B cell (primary cell): ENCODE measurements at regions of chr1 and their contacts with region 1.

Region 1: DNA sequence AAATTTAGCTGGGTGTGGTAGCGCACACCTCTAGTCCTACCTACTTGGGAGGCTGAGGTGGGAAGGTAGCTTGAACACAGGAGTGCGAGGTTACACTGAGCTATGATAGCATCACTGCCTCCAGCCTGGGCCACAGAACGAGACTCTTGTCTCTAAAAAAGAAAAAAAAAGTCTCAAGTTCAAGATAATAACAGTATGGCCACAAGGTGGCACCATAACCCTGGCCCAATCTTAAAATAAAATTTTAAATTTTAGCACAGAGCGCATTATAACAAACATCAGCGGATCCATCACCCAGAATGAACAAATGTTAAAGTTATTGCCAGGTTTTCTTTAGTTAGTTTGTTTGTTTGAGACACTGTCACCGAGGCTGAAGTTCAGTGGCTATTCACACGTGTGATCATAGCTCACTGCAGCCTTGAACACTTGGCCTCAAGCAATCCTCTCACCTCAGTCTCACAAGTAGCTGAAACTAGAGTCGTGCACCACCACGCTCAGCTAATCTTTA is 2.9 kb upstream of the HTR6 start:
- DNase-seq: peak; percentile 64
- ATAC-seq: peak; percentile 20
- H3K4me3 ChIP-seq: no peak overlapping the region
- H3K4me3 Mint-ChIP-seq: no peak overlapping the region
- H3K27ac ChIP-seq: no peak overlapping the region
- H3K27ac Mint-ChIP-seq: no peak overlapping the region
- H3K4me1 ChIP-seq: peaks cover 22 to 23% of the 10 kb centered on the region in 2 donors
- H3K4me1 Mint-ChIP-seq: peaks cover 17% of the 10 kb centered on the region
- H3K27me3 ChIP-seq: peaks cover 0 to 28% (median 7%) of the 10 kb centered on the region in 4 experiments
- H3K27me3 Mint-ChIP-seq: peaks cover 42% of the 10 kb centered on the region
- CTCF ChIP-seq: peak; percentile 79

Region 2: GRCh38 chr1:19651141-19651737 is 10.5 kb before region 1 on chr1:
- CTCF ChIA-PET with region 1: interaction called, 20 read pairs
- POLR2A ChIA-PET with region 1: no interaction called
- intact Hi-C with region 1: no loop called
- DNase-seq: peak; percentile 57
- ATAC-seq: peak; percentile 48
- H3K4me3 ChIP-seq: no peak overlapping the region
- H3K4me3 Mint-ChIP-seq: no peak overlapping the region
- H3K27ac ChIP-seq: no peak overlapping the region
- H3K27ac Mint-ChIP-seq: no peak overlapping the region
- H3K4me1 ChIP-seq: peaks cover 0 to 6% of the 10 kb centered on the region in 2 donors
- H3K4me1 Mint-ChIP-seq: peaks cover 2% of the 10 kb centered on the region
- H3K27me3 ChIP-seq: peaks cover 0 to 16% (median 1%) of the 10 kb centered on the region in 4 experiments
- H3K27me3 Mint-ChIP-seq: peaks cover 28% of the 10 kb centered on the region
- CTCF ChIP-seq: peak; percentile 54

Region 3: DNA sequence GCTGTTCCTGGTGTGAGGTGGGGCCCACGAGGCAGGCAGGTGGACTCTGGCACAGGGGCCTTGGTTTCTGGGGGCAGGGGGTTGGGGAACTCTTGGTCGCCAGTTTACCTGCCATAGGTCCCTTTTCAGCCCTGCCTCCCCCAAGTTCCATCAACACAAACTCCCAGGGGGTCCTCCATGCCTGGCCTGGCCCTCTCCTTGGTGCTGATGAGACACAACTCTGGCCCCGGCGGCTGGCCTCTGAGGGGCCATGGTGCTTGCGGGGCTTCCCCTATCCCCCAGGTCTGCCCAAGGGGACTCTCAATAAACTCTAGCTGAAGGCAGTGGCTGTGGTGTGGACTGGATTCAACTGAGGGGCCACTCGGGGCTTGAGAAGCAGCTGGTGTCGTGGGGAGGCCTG is 18.9 kb after region 1 on chr1:
- CTCF ChIA-PET with region 1: interaction called, 12 read pairs
- POLR2A ChIA-PET with region 1: no interaction called
- intact Hi-C with region 1: no loop called
- DNase-seq: no peak
- ATAC-seq: no peak
- H3K4me3 ChIP-seq: no peak overlapping the region
- H3K4me3 Mint-ChIP-seq: no peak overlapping the region
- H3K27ac ChIP-seq: no peak overlapping the region
- H3K27ac Mint-ChIP-seq: no peak overlapping the region
- H3K4me1 ChIP-seq: no peaks in the 10 kb centered on the region
- H3K4me1 Mint-ChIP-seq: no peaks in the 10 kb centered on the region
- H3K27me3 ChIP-seq: peaks cover 0 to 4% (median 1%) of the 10 kb centered on the region in 4 experiments
- H3K27me3 Mint-ChIP-seq: peaks cover 11% of the 10 kb centered on the region
- CTCF ChIP-seq: no peak

Region 4: DNA sequence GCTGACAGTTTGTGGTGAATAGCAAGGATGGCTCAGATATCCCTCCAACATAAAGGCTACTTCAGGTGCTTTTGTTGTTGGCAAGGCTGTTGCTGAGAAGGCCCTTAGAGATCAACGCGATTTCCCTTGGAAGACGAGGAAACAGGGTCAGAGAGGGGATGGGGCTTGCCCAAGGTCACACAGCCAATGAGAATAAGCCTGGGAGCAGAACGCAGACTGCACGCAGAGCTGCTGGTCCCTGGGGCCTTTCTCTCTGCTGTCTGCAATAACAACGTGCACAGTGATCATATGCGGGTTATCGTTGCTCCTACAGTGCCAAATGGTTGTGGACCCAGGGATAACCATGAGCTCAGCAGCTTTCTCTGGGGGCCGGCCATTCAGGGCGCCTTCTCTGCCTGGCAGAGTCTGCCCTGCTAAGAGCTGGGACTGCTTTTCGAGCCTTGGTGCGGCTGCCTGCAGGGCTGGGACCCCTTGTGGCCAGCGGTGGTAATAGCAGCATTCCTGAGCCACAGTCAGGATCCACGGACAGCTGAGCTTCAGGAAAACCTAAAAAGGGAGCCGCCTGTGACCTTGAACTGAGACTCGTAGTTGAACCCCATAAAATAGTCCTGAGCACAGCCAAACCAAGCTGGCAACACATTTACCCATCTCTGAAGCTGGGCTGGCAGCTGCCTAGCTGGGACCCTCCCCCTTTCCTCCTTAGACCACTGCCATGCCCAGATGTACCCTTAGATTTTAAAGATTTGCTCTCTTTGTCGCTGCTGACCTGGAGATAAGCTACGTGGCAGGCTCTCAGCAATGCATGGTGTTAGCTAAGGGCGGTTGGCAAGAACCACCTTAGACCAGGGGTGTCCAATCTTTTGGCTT is 42.7 kb after region 1 on chr1:
- CTCF ChIA-PET with region 1: interaction called, 49 read pairs
- POLR2A ChIA-PET with region 1: no interaction called
- intact Hi-C with region 1: loop called (anchors 1 kb)
- DNase-seq: peak; percentile 56
- ATAC-seq: peak; percentile 58
- H3K4me3 ChIP-seq: no peak overlapping the region
- H3K4me3 Mint-ChIP-seq: no peak overlapping the region
- H3K27ac ChIP-seq: no peak overlapping the region
- H3K27ac Mint-ChIP-seq: no peak overlapping the region
- H3K4me1 ChIP-seq: no peaks in the 10 kb centered on the region
- H3K4me1 Mint-ChIP-seq: peaks cover 3% of the 10 kb centered on the region
- H3K27me3 ChIP-seq: no peaks in the 10 kb centered on the region
- H3K27me3 Mint-ChIP-seq: no peaks in the 10 kb centered on the region
- CTCF ChIP-seq: peak; percentile 88

Region 5: GRCh38 chr1:19765623-19766022 is 103.8 kb after region 1 on chr1:
- CTCF ChIA-PET with region 1: no interaction called
- POLR2A ChIA-PET with region 1: no interaction called
- intact Hi-C with region 1: no loop called
- DNase-seq: no peak
- ATAC-seq: no peak
- H3K4me3 ChIP-seq: no peak overlapping the region
- H3K4me3 Mint-ChIP-seq: no peak overlapping the region
- H3K27ac ChIP-seq: no peak overlapping the region
- H3K27ac Mint-ChIP-seq: no peak overlapping the region
- H3K4me1 ChIP-seq: no peaks in the 10 kb centered on the region
- H3K4me1 Mint-ChIP-seq: peaks cover 5% of the 10 kb centered on the region
- H3K27me3 ChIP-seq: no peaks in the 10 kb centered on the region
- H3K27me3 Mint-ChIP-seq: no peaks in the 10 kb centered on the region
- CTCF ChIP-seq: no peak

Region 6: DNA sequence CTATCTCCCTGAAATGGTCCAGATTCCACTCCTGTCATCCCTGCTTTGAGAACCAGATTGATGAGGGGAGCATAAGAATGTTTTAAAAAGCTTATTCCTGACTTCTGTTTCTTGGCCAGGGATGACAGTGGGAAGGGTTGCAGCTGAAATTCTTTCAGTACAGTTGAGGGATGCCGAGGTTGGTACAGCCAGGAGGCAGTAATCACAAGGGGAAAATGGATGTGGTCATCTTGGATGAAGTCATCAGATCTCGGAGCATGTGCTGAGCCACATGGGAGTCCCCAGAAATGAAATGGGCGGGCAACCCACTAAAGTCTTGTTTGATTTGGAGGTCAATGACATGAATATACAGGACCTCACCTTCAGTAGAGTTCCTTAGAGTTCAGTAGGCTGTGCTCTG is 280.3 kb after region 1 on chr1:
- CTCF ChIA-PET with region 1: no interaction called
- POLR2A ChIA-PET with region 1: no interaction called
- intact Hi-C with region 1: no loop called
- DNase-seq: no peak
- ATAC-seq: no peak
- H3K4me3 ChIP-seq: no peak overlapping the region
- H3K4me3 Mint-ChIP-seq: no peak overlapping the region
- H3K27ac ChIP-seq: no peak overlapping the region
- H3K27ac Mint-ChIP-seq: no peak overlapping the region
- H3K4me1 ChIP-seq: no peaks in the 10 kb centered on the region
- H3K4me1 Mint-ChIP-seq: no peaks in the 10 kb centered on the region
- H3K27me3 ChIP-seq: peaks cover 0 to 5% (median 0%) of the 10 kb centered on the region in 4 experiments
- H3K27me3 Mint-ChIP-seq: peaks cover 16% of the 10 kb centered on the region
- CTCF ChIP-seq: no peak